ENCODE measurements at regions of chr6 and their contacts with region 1.

Region 1: GRCh38 chr6:6659600-6660327 is 71.2 kb downstream of the LY86 start:
- DNase-seq: no peak
- H3K4me3 Mint-ChIP-seq: no peak overlapping the region
- H3K27ac Mint-ChIP-seq: peak overlapping the region; percentile 99
- H3K4me1 Mint-ChIP-seq: peaks cover 72% of the 10 kb centered on the region
- H3K27me3 Mint-ChIP-seq: no peaks in the 10 kb centered on the region

Region 2: DNA sequence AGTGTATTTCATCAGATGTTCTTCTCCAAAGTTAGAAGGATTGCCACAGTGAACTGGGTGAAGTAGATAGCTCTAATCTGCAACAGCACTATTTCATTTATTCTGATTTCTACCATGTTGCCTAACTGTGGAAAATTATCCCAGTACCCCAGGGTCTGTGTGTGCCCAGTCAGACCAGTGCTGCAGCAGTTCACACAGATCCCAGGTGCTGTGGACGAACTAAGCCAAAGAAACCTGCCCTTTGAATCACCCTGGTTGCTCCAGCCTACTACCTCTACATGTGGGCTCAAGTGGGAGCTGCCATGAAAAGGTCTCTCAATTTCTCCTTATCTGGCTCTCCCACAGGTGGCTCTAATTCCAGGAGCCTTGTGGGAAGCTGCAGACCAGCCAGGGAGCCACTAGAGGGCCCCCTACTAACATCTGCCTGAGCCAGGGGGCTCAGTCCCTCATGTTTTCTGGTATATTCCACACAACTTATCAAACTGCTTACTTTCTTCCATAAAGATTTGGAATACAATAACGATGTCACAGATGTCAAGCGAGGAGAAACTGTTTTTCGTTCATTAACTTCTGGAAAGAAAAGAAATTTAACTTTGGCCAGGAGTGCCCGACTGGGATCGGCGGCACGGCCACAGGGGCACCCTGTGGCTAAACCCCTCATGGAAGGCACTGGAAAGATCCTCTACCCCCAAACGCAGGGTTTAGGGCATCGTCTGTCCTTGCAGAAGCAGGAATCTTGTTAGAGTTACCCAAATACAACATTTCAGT is 102.8 kb before region 1 on chr6:
- intact Hi-C with region 1: loop called (anchors 5 kb)
- DNase-seq: no peak
- H3K4me3 Mint-ChIP-seq: no peak overlapping the region
- H3K27ac Mint-ChIP-seq: no peak overlapping the region
- H3K4me1 Mint-ChIP-seq: peaks cover 46% of the 10 kb centered on the region
- H3K27me3 Mint-ChIP-seq: peaks cover 23% of the 10 kb centered on the region

Region 3: GRCh38 chr6:6569481-6570167 is 90.1 kb before region 1 on chr6:
- intact Hi-C with region 1: no loop called
- DNase-seq: no peak
- H3K4me3 Mint-ChIP-seq: no peak overlapping the region
- H3K27ac Mint-ChIP-seq: no peak overlapping the region
- H3K4me1 Mint-ChIP-seq: peaks cover under 1% of the 10 kb centered on the region
- H3K27me3 Mint-ChIP-seq: peaks cover 24% of the 10 kb centered on the region

Region 4: DNA sequence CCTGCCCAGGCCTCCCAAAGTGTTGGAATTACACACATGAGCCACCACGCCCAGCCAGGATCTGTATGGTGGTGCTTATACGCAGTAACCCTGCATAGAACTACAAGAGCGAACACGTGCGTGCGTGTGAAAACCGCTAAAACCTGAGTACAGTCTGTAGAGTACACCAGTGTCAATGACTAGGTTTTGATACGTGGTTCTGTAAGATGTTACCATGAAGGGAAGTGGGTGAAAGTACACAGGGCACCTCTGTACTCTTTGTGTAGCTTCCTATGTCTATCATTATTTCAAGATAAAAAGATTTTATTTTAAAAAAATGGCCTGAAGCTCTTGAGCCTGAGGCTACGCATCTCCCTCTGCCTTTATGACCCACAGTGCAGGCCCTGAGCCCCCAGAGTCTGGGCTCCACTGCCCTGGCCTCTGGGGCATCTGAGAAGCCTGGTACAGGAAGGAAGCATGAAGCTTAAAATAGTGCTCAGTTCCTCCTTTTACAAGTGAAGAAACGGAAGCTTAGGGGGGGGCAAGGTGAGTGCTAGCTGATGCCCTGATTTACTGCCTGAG is 49.7 kb before region 1 on chr6:
- intact Hi-C with region 1: loop called (anchors 2 kb)
- DNase-seq: no peak
- H3K4me3 Mint-ChIP-seq: no peak overlapping the region
- H3K27ac Mint-ChIP-seq: peak overlapping the region; percentile 84
- H3K4me1 Mint-ChIP-seq: peaks cover 47% of the 10 kb centered on the region
- H3K27me3 Mint-ChIP-seq: no peaks in the 10 kb centered on the region

Region 5: GRCh38 chr6:6643398-6643797 is 16.4 kb before region 1 on chr6:
- intact Hi-C with region 1: loop called (anchors 1 kb)
- DNase-seq: no peak
- H3K4me3 Mint-ChIP-seq: no peak overlapping the region
- H3K27ac Mint-ChIP-seq: peak overlapping the region; percentile 68
- H3K4me1 Mint-ChIP-seq: peaks cover 41% of the 10 kb centered on the region
- H3K27me3 Mint-ChIP-seq: no peaks in the 10 kb centered on the region

Region 6: DNA sequence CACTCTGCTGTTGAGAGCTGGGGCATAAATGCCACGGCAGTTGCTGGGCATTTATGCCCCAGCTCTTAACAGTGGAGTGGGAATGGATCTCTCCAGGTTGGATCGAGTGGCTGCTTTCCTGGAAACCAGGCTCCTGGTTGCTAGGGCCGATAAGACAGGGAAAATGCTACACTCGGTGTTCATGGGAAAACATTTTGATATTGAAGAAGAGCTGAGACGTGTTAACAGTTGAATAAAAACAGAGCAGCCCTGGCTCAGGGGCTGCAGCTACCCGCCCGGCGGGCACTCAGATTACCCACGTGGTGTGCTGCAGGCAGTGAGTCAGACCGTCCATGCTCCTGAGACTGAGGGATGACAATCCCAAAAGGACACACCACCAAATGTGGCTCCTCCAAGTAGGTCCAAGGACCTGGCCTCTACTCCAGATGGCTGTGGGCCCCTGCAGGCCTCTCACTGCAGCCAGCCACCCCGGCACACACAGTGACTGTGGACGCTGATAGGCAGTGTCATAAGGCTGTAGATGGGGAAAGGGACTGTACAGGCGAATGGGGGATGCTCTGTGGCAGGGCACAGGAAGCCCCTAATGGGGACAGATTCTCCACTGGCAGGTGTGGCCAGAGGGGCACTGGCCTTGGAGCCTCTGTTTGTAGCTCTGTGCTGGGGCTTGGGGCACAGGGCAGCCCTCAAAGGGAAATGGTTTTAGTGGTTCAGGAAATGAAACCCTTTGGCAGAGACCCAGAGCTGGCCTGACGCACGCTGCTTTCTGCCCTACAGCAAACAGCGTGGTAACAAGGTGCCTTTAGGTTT is 166.5 kb after region 1 on chr6:
- intact Hi-C with region 1: no loop called
- DNase-seq: no peak
- H3K4me3 Mint-ChIP-seq: no peak overlapping the region
- H3K27ac Mint-ChIP-seq: no peak overlapping the region
- H3K4me1 Mint-ChIP-seq: peaks cover 26% of the 10 kb centered on the region
- H3K27me3 Mint-ChIP-seq: peaks cover 20% of the 10 kb centered on the region

Region 7: DNA sequence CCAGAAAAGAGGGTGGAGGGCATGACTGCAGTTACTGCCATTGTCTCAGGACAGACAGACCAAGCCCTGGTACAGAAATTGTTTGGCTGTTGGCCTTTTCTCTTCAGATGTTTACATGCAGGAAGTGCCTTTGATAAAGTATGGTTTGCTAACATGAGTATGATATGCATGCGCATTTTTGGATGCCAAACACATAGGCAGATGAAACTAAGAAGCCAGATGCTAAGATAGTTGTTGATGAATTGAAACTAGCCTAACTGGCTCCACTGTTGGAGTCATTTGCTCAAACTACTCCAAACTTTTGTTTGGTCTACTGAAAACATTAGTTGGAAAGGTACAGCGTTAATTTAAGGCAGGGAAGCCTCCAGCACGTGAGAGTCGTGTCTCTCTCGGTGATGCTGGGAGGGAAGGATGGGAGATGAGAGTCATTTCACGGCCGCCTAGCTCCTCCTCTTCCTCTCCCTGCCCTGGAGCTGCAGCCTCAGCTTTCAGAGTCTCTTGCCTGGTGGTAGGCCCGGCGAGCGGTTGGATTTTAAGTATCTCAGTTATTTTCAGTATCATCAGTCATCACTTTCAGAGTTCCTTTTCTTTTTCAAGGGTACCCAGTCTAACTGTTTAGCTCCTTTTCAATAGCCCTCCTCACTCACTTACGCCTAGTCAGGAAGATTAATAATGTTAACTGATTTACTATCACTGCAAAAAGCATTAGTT is 477.7 kb after region 1 on chr6:
- intact Hi-C with region 1: loop called (anchors 5 kb)
- DNase-seq: peak; percentile 66
- H3K4me3 Mint-ChIP-seq: peak overlapping the region; percentile 84
- H3K27ac Mint-ChIP-seq: peak overlapping the region; percentile 99
- H3K4me1 Mint-ChIP-seq: peaks cover 63% of the 10 kb centered on the region
- H3K27me3 Mint-ChIP-seq: no peaks in the 10 kb centered on the region

Region 8: GRCh38 chr6:7389451-7390225 is 729.9 kb after region 1 on chr6 and contains the starts of genes CAGE1 and RIOK1:
- intact Hi-C with region 1: loop called (anchors 10 kb)
- DNase-seq: peak; percentile 93
- H3K4me3 Mint-ChIP-seq: peak within 1 kb of the TSS; percentile 92
- H3K27ac Mint-ChIP-seq: peak within 1 kb of the TSS; percentile 99
- H3K4me1 Mint-ChIP-seq: peaks cover 27% of the 10 kb centered on the region
- H3K27me3 Mint-ChIP-seq: no peaks in the 10 kb centered on the region
- total RNA-seq, gene CAGE1: 0.16 TPM in 2 replicates
- total RNA-seq, gene RIOK1: 44.4 and 53.3 TPM in 2 replicates

Measured in activated T-helper 2 cell treated with anti-CD3 and anti-CD28 coated beads, Interferon-gamma antibody, Interleukin-2, Interleukin-4, amounts not matched to agents 10 μg/mL and 5 μg/mL and 100 μg/mL, durations not matched to agents 14 hours and 24 hours and 36 hours (primary cell).